ENCODE measurements at regions of chr2 and their contacts with region 1.

Region 1: GRCh38 chr2:178112202-178113152 is at the start of gene RBM45:
- DNase-seq: peak; percentile 84 to 91
- ATAC-seq: peak; percentile 91 to 98 (median 94)
- H3K4me3 ChIP-seq: peak within 1 kb of the TSS; percentile 73
- H3K4me3 Mint-ChIP-seq: peak within 1 kb of the TSS; percentile 92
- H3K27ac ChIP-seq: peak within 1 kb of the TSS; percentile 51
- H3K27ac Mint-ChIP-seq: peak within 1 kb of the TSS; percentile 79 to 87
- H3K4me1 ChIP-seq: peaks cover 11% of the 10 kb centered on the region
- H3K4me1 Mint-ChIP-seq: peaks cover 30 to 38% of the 10 kb centered on the region in 2 donors
- H3K27me3 ChIP-seq: no peaks in the 10 kb centered on the region
- H3K27me3 Mint-ChIP-seq: no peaks in the 10 kb centered on the region
- CTCF ChIP-seq: peak; percentile 95
- total RNA-seq, gene RBM45: 7.8 to 10.9 (median 9.1) TPM

Region 2: GRCh38 chr2:178072383-178073301 is 39.8 kb before region 1 on chr2 and contains the start of gene PDE11A:
- intact Hi-C with region 1: no loop called
- DNase-seq: peak in 1 of 2 donors; percentile 10
- ATAC-seq: peak in 2 of 3 donors; percentile 34 to 38
- H3K4me3 ChIP-seq: no peak within 1 kb of the TSS
- H3K4me3 Mint-ChIP-seq: no peak within 1 kb of the TSS
- H3K27ac ChIP-seq: no peak within 1 kb of the TSS
- H3K27ac Mint-ChIP-seq: no peak within 1 kb of the TSS
- H3K4me1 ChIP-seq: peaks cover 9% of the 10 kb centered on the region
- H3K4me1 Mint-ChIP-seq: peaks cover 5 to 6% of the 10 kb centered on the region in 2 donors
- H3K27me3 ChIP-seq: peaks cover 15% of the 10 kb centered on the region
- H3K27me3 Mint-ChIP-seq: peaks cover 35 to 48% of the 10 kb centered on the region in 2 donors
- CTCF ChIP-seq: no peak
- total RNA-seq, gene PDE11A: not detected

Region 3: DNA sequence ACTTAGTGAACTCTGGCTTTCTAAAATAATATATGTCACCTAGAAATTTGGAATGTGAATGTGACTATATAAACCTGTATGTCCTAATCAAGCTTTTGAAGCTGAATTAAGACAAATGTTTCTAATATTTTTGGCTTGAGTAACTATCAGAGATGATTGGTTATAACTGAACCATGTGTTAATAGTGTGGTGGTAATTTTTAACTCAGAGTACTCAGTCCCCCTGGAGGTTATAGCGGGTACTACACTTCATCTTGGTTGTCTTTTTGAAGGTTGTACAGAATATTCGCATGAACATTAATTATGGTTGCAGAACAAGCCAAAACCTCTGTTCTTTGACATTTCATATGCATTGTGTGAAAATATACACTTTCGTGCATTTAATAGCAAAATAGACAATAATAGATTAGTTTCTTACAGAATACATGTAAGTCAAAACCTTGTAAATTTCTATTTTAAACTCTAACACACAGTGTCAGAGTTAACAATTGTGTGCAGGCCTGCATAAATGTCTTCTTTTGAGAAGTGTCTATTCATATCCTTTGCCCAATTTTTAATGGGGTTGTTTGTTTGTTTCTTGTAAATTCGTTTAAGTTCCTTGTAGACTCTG is 167.9 kb after region 1 on chr2:
- intact Hi-C with region 1: loop called (anchors 1 kb)
- DNase-seq: peak in 1 of 2 donors; percentile 65
- ATAC-seq: peak; percentile 70 to 88 (median 80)
- H3K4me3 ChIP-seq: no peak overlapping the region
- H3K4me3 Mint-ChIP-seq: no peak overlapping the region
- H3K27ac ChIP-seq: no peak overlapping the region
- H3K27ac Mint-ChIP-seq: no peak overlapping the region
- H3K4me1 ChIP-seq: no peaks in the 10 kb centered on the region
- H3K4me1 Mint-ChIP-seq: no peaks in the 10 kb centered on the region
- H3K27me3 ChIP-seq: no peaks in the 10 kb centered on the region
- H3K27me3 Mint-ChIP-seq: peaks cover 10 to 11% of the 10 kb centered on the region in 2 donors
- CTCF ChIP-seq: peak; percentile 79

Region 4: DNA sequence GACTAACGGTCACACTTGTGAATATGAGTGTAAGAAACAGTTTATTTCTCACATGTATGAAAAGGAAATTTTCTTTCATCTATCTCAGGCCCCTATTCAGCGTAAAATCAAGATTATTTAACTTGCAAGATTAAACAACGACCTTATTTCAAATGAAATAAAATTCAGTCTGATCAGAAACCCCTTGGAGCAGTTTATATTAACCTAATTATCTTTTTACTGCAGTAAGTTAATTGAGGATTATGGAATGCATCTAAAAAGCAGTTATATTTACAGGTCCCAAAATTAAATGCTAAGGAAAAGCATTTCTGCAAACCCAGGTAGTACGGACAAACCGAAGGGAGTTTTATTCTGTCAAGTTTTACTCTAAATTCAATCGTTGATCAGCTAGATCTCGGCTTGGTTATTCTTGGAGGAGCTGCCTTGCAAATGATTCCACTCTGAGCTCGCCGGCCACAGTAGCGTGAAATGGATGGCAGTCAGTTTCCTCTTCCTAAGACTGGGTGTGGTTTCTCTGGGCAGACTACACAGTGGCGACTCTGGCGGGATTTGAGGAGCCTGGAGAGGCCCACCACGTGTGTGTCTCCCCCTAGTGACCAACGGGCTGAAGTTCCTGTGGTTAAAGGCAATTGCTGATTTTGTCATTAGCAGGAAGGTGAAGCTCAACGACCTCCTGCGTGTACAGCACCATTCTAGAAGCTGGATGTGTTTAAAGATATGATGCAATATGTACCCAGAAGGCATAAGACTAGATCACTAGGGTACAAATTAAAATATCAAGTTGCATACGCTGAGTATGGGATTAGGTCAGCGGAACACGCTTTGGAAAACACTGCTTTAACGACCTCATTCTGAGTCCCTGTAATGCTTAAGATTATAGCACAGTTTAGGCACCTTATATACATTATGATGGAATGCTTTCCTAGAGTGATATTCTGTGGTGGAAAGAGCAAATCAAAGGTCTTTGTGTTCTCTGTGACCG is 302.1 kb after region 1 on chr2:
- intact Hi-C with region 1: loop called (anchors 2 kb)
- DNase-seq: peak; percentile 59 to 89
- ATAC-seq: peak; percentile 75 to 85 (median 76)
- H3K4me3 ChIP-seq: peak overlapping the region; percentile 59
- H3K4me3 Mint-ChIP-seq: peak overlapping the region; percentile 96
- H3K27ac ChIP-seq: peak overlapping the region; percentile 73
- H3K27ac Mint-ChIP-seq: peak overlapping the region; percentile 84 to 99
- H3K4me1 ChIP-seq: peaks cover 12% of the 10 kb centered on the region
- H3K4me1 Mint-ChIP-seq: peaks cover 22 to 27% of the 10 kb centered on the region in 2 donors
- H3K27me3 ChIP-seq: no peaks in the 10 kb centered on the region
- H3K27me3 Mint-ChIP-seq: no peaks in the 10 kb centered on the region
- CTCF ChIP-seq: peak; percentile 76